Left ventricle myocardium inferior (tissue), 1 donor: ENCODE measurements at regions of chr16 and their contacts with region 1.

Region 1: GRCh38 chr16:49874613-49875237 is 18.8 kb upstream of the ZNF423 start:
- DNase-seq: no peak
- H3K4me3 ChIP-seq: no peak overlapping the region
- H3K27ac ChIP-seq: no peak overlapping the region
- H3K4me1 ChIP-seq: peaks cover 13% of the 10 kb centered on the region
- H3K27me3 ChIP-seq: peaks cover 40% of the 10 kb centered on the region
- CTCF ChIP-seq: no peak

Region 2: DNA sequence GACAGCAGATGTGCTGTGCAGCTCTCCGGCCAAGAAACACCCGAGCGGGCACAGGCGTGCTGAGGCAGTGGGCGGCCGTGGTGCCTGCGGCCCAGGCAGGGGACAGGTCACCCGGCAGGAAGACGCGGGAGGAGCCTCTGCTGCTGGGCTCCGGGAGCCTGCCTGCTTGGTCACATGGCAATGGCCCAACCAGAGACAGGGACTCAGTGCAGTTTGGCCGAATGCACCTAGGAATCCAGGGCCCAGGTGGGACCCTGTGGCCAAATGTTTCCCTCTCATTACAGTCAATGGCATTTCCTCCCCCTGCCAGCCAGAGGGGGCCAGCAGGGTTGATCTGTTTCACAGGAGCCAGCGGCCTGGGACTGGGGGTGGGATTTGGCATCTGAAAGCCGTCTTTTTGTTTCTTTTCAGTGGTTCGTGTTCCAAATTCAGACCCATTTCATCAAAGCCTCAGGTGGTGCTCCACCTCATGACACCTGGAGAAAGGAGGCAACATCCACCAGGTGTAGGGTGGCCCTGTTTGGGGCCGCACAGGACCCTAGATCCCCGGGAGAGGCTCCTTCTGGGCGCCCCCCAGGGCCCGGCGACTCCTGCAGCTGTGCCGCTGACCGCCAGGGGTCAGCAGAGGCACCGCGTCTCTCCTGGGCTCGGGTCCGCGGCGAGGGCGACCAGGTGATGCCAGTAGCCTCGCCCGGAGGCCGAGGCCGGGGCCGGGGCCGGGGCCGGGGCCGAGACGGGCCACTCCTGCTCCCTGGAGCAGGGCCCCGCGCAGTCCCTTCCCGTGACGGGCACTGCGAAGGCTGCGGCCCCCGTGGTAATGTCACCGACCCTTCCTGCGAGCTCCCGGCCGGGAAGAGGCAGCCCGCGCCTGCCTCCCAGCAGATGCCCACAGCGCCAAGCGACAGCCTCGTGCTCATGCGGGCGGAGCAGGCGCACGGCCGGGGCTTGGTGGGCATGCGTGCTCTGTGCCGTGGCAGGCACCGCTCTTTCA is 382.7 kb before region 1 on chr16:
- intact Hi-C with region 1: loop called (anchors 5 kb)
- DNase-seq: peak; percentile 36
- H3K4me3 ChIP-seq: peak overlapping the region; percentile 64
- H3K27ac ChIP-seq: peak overlapping the region; percentile 59
- H3K4me1 ChIP-seq: peaks cover 14% of the 10 kb centered on the region
- H3K27me3 ChIP-seq: no peaks in the 10 kb centered on the region
- CTCF ChIP-seq: peak; percentile 97

Region 3: GRCh38 chr16:49924078-49924477 is 49.4 kb after region 1 on chr16:
- intact Hi-C with region 1: no loop called
- DNase-seq: no peak
- H3K4me3 ChIP-seq: no peak overlapping the region
- H3K27ac ChIP-seq: no peak overlapping the region
- H3K4me1 ChIP-seq: no peaks in the 10 kb centered on the region
- H3K27me3 ChIP-seq: peaks cover 49% of the 10 kb centered on the region
- CTCF ChIP-seq: no peak